ENCODE measurements at regions of chr3 and their contacts with region 1.

Region 1: DNA sequence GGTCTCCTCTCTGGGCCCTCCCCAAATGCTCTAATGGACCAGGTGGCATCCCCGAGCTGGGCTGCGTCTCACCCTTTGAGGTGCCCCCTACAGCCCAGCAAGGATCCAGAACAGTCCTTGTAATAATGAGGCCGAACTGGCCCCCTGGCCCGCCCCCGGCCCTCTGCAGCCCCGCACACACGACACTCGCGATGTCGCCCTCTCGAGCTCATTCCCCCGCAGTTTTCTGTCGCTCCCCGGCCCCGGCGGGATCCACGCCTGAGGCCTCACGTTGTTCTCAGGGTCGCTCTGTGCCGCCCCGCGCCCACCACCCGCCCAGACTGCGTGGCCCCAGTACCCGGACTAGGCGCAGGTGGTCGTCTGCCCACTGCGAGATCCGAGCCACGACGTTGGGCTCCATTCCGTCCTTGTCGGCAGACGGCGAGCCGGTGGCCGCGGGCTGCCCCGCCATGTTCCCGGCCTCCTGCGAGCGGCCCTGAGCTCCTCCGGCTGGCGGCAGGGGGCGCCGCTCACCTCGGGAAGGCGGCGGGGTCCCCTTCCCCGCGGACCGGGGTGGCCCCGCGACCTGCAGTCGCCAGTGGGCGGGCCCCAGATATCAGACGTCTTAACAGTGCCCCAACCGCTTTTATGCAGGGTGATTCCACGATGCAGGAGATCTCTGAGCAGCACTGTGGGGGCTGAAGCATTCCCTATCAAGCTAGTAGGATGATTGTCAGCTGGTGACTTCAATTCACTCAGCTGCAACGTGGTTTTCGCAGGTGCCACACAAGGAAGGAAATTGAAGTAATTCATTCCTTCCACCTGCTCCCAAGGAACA is at the start of gene C3orf33:
- DNase-seq: no peak
- H3K4me3 ChIP-seq: peak within 1 kb of the TSS; percentile 79
- CTCF ChIP-seq: peak; percentile 91

Region 2: DNA sequence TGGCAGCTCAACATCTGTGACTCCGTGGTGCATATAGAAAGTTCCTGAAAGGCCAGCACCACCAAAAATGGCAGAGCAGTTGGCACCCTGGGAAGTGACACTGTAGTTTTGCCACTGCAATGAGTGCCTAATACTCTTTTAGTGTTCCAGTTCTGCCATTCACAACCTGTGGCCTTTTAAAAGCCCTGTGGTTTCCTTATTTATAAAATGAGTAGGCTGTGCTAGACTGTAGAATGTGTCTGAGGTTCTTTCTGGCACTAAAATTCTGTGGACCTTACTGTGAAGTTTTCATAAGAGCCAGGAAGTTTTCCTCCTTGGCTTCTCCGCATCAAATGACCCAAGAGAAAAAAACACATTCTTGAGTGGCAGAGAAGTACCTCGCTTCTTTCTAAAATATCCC is 651.8 kb before region 1 on chr3:
- CTCF ChIA-PET with region 1: no interaction called
- POLR2A ChIA-PET with region 1: no interaction called
- DNase-seq: no peak
- H3K4me3 ChIP-seq: no peak overlapping the region
- CTCF ChIP-seq: no peak

Region 3: GRCh38 chr3:155664925-155665695 is 140.9 kb before region 1 on chr3:
- CTCF ChIA-PET with region 1: no interaction called
- POLR2A ChIA-PET with region 1: no interaction called
- DNase-seq: peak; percentile 59
- H3K4me3 ChIP-seq: no peak overlapping the region
- CTCF ChIP-seq: no peak

Region 4: GRCh38 chr3:155737844-155738460 is 68.1 kb before region 1 on chr3:
- CTCF ChIA-PET with region 1: no interaction called
- POLR2A ChIA-PET with region 1: no interaction called
- DNase-seq: no peak
- H3K4me3 ChIP-seq: no peak overlapping the region
- CTCF ChIP-seq: no peak

Region 5: DNA sequence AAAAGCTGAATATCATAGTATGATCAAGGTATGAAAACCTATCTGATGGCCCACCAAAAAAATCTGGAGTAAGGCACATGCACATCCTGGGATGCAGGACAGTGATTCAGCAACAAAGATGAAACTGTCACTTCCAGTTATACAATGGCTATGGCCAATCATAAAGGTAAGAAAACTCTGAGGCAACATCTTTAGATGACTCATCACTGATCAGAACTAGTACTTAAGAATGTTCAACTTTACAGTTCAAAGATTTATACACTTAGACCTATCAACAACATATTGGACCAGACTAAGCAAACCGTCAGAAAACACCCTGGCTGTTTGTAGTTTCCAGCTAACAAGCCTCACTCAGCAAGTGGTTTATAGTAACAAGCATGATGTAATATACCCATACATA is 39.8 kb before region 1 on chr3:
- CTCF ChIA-PET with region 1: interaction called, 12 read pairs
- POLR2A ChIA-PET with region 1: no interaction called
- DNase-seq: no peak
- H3K4me3 ChIP-seq: no peak overlapping the region
- CTCF ChIP-seq: no peak

Region 6: GRCh38 chr3:155780291-155780690 is 25.7 kb before region 1 on chr3:
- CTCF ChIA-PET with region 1: interaction called, 28 read pairs
- POLR2A ChIA-PET with region 1: no interaction called
- DNase-seq: no peak
- H3K4me3 ChIP-seq: no peak overlapping the region
- CTCF ChIP-seq: no peak

Region 7: GRCh38 chr3:155835341-155836071 is 29.5 kb after region 1 on chr3:
- CTCF ChIA-PET with region 1: interaction called, 13 read pairs
- POLR2A ChIA-PET with region 1: no interaction called
- DNase-seq: no peak
- H3K4me3 ChIP-seq: no peak overlapping the region
- CTCF ChIP-seq: no peak

Region 8: DNA sequence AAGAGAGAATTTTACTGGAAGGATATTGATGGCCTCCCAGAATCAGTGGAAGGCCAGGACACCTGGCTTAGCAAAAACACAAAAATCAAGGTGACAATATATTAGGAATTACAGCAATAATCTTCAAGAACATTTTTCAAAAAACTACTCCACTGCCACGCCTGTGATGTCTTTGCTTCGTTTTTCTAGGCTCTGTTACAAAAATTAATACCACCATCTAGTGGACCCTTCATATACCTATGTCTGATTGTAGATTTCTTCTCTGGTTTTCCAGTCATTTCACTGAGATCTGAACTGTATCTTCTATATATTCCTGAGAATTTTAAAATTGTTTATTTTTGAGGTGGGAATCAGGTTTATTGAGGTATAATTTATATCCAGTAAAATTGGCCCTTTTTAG is 53.8 kb after region 1 on chr3:
- CTCF ChIA-PET with region 1: interaction called, 11 read pairs
- POLR2A ChIA-PET with region 1: no interaction called
- DNase-seq: no peak
- H3K4me3 ChIP-seq: no peak overlapping the region
- CTCF ChIP-seq: no peak

Measured in AG04449 (cell line).